Astrocyte of the cerebellum (primary cell): ENCODE measurements at regions of chr16 and their contacts with region 1.

Region 1: DNA sequence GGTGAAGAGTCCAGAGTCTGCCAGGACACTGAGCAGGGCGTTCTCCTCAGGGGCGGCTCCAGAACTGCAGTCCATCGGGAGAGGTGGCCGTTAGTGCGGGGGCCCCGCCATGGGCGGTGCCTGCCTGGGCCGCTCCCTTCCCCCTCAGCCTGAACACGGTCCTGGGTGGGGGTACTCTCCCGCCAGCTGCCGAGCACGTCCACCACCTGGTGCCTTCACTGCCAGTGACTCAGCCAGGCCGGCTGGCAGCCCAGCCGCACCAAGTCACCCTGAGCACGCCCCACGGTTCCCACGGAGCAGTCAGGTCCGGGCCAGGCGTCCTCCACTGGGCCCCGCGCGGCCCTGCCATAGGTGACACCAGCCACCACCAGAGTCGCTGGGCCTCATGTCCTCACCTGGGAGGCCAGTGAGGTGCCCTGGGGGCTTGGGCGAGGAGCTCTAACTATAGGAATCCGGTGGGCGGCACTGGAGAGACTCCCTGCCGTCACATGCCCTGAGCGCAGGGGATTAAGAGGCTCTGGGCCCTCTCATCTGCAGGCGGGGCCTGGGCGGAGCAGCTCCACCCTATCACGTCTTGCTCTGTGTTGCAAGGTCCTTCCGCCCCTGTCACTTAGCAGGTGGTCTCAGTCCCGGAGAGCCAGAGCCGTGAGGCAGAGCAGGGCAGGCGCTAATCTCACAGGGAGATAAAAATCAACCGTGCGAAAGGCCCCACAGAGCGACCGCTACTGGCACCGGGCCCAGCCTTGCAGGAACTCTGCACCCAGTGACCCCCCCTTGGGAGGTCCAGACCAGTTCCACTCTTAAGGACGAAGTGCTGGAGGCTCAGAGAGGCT is 14.3 kb downstream of the PIEZO1 start:
- DNase-seq: no peak
- H3K4me3 ChIP-seq: no peak overlapping the region
- CTCF ChIP-seq: no peak

Region 2: GRCh38 chr16:88856828-88857733 is 86.4 kb after region 1 on chr16 and contains the starts of genes GALNS and TRAPPC2L:
- in situ Hi-C with region 1: loop called (anchors 25 kb)
- DNase-seq: peak; percentile 84
- H3K4me3 ChIP-seq: peak within 1 kb of the TSS; percentile 80
- CTCF ChIP-seq: no peak